Activated T-helper 2 cell treated with anti-CD3 and anti-CD28 coated beads, Interferon-gamma antibody, Interleukin-2, Interleukin-4, amounts not matched to agents 10 μg/mL and 5 μg/mL and 100 μg/mL, durations not matched to agents 14 hours and 24 hours and 36 hours (primary cell): ENCODE measurements at regions of chr11 and their contacts with region 1.

Region 1: GRCh38 chr11:98307827-98308491 is 712.8 kb upstream of the CNTN5 start:
- DNase-seq: no peak
- H3K4me3 Mint-ChIP-seq: no peak overlapping the region
- H3K27ac Mint-ChIP-seq: no peak overlapping the region
- H3K4me1 Mint-ChIP-seq: no peaks in the 10 kb centered on the region
- H3K27me3 Mint-ChIP-seq: no peaks in the 10 kb centered on the region

Region 2: GRCh38 chr11:98296091-98296880 is 11.7 kb before region 1 on chr11:
- intact Hi-C with region 1: loop called (anchors 1 kb)
- DNase-seq: no peak
- H3K4me3 Mint-ChIP-seq: no peak overlapping the region
- H3K27ac Mint-ChIP-seq: no peak overlapping the region
- H3K4me1 Mint-ChIP-seq: no peaks in the 10 kb centered on the region
- H3K27me3 Mint-ChIP-seq: no peaks in the 10 kb centered on the region